ENCODE measurements at regions of chr12 and their contacts with region 1.

Region 1: GRCh38 chr12:118103604-118104382 is at the start of gene VSIG10:
- DNase-seq: peak; percentile 74 to 80
- ATAC-seq: peak; percentile 93
- H3K4me3 ChIP-seq: peak within 1 kb of the TSS; percentile 70 to 93 (median 92)
- H3K27ac ChIP-seq: peak within 1 kb of the TSS; percentile 81 to 97 (median 95)
- H3K4me1 ChIP-seq: peaks cover 14 to 24% of the 10 kb centered on the region in 2 donors
- H3K27me3 ChIP-seq: no peaks in the 10 kb centered on the region
- CTCF ChIP-seq: no peak
- POLR2A ChIP-seq: peak; percentile 49 to 71
- total RNA-seq, gene VSIG10: 9.3 to 22.1 (median 17.0) TPM

Region 2: GRCh38 chr12:118016424-118017264 is 87.1 kb before region 1 on chr12 and contains the start of gene RFC5:
- in situ Hi-C with region 1: no loop called
- intact Hi-C with region 1: loop called (anchors 10 kb)
- DNase-seq: peak; percentile 94 to 96
- ATAC-seq: peak; percentile 96 to 98
- H3K4me3 ChIP-seq: peak within 1 kb of the TSS; percentile 81 to 97 (median 92)
- H3K27ac ChIP-seq: peak within 1 kb of the TSS; percentile 49 to 73 (median 60)
- H3K4me1 ChIP-seq: peaks cover 11 to 12% of the 10 kb centered on the region in 2 donors
- H3K27me3 ChIP-seq: no peaks in the 10 kb centered on the region
- CTCF ChIP-seq: no peak
- POLR2A ChIP-seq: no peak
- total RNA-seq, gene RFC5: 3.5 to 9.9 (median 5.4) TPM

Region 3: DNA sequence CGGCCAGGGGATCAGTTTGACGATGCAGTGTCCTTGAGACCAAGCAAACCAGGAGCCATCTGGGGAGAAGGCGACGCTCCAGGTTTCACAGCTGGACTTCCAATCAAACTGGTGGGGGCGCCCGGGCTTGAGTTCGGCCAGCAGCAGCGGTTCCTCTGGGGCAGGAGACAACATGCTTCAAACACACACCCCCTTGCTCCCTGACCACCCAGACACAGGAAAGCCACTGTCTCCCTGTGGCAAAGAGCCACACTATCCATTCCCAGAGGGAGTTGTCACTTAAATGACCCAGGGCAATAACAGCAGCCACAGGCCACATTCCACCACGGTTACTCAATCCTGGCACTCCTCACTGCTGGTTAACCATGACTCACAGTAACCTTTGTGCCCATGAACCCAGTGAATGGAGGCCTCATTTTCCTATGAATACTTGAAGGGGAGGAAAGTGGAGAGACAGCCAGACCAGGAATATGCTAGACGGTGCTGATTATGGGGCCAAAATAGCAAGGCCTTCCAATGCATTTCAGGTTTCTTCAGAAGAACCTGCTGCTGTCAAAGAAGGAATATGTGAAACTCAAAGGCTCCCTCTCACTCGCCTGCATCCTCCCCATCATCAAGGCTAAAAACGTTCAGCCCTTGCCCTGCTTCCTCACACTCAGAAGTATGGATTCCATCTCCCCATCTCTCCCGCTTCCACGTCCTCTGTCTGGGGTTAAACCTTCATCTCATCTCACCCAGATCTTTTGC is 51.3 kb before region 1 on chr12:
- in situ Hi-C with region 1: no loop called
- intact Hi-C with region 1: loop called (anchors 2 kb)
- DNase-seq: peak; percentile 76 to 95
- ATAC-seq: peak; percentile 99 to 100
- H3K4me3 ChIP-seq: peak overlapping the region in 3 of 4 donors; percentile 8 to 11 (median 10)
- H3K27ac ChIP-seq: peak overlapping the region; percentile 67 to 82 (median 80)
- H3K4me1 ChIP-seq: peaks cover 44 to 54% of the 10 kb centered on the region in 2 donors
- H3K27me3 ChIP-seq: no peaks in the 10 kb centered on the region
- CTCF ChIP-seq: no peak
- POLR2A ChIP-seq: no peak

Region 4: GRCh38 chr12:118061011-118061875 is 42.5 kb before region 1 on chr12 and contains the start of gene WSB2:
- in situ Hi-C with region 1: no loop called
- intact Hi-C with region 1: loop called (anchors 2 kb)
- DNase-seq: peak; percentile 58 to 67
- ATAC-seq: peak; percentile 65 to 66
- H3K4me3 ChIP-seq: peak within 1 kb of the TSS; percentile 82 to 94 (median 87)
- H3K27ac ChIP-seq: peak within 1 kb of the TSS; percentile 92 to 96 (median 96)
- H3K4me1 ChIP-seq: peaks cover 23 to 30% of the 10 kb centered on the region in 2 donors
- H3K27me3 ChIP-seq: no peaks in the 10 kb centered on the region
- CTCF ChIP-seq: no peak
- POLR2A ChIP-seq: peak; percentile 30 to 45
- total RNA-seq, gene WSB2: 83.5 to 133 (median 93.5) TPM

Region 5: GRCh38 chr12:118135788-118136558 is 32.2 kb after region 1 on chr12 and contains the start of gene PEBP1:
- in situ Hi-C with region 1: no loop called
- intact Hi-C with region 1: loop called (anchors 1 kb)
- DNase-seq: peak; percentile 94 to 95
- ATAC-seq: peak; percentile 81 to 91
- H3K4me3 ChIP-seq: peak within 1 kb of the TSS; percentile 75 to 94 (median 92)
- H3K27ac ChIP-seq: peak within 1 kb of the TSS; percentile 91 to 97 (median 96)
- H3K4me1 ChIP-seq: peaks cover 14 to 37% of the 10 kb centered on the region in 2 donors
- H3K27me3 ChIP-seq: no peaks in the 10 kb centered on the region
- CTCF ChIP-seq: peak in 1 of 5 experiments; percentile 27
- POLR2A ChIP-seq: peak; percentile 92 to 93
- total RNA-seq, gene PEBP1: 306 to 442 (median 330) TPM

Region 6: DNA sequence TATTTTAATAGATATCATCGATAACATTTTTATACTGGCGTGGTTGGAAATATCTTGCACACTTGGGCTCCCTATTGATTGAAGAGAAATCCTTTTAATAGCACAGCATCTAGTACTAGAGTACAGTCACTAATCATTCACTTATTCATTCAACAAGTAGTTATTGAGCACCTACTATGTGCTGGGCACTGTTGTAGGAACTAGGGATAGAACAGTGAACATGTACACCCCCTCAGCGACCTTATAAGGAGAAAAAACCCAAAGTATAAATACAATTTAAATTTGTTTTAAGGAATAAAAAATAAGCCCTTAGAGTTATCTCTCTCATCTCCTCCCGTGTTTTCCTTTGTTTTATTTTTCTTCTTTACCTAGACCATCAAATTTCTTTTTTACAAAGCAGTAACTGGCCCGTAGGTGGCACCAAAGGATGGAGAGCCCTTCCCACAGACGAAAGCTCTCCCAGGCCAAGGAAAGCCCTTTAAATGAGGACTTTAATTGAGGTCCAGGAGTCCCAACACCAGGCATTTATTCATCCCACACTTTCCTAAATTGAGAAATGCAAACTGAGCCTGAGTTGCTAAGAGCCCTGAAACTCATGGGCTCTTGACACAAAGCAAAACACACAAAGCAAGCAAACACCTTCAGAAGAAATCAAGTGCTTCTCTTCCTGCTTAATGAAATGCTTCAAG is 61.1 kb after region 1 on chr12:
- in situ Hi-C with region 1: no loop called
- intact Hi-C with region 1: no loop called
- DNase-seq: no peak
- ATAC-seq: no peak
- H3K4me3 ChIP-seq: no peak overlapping the region
- H3K27ac ChIP-seq: no peak overlapping the region
- H3K4me1 ChIP-seq: no peaks in the 10 kb centered on the region
- H3K27me3 ChIP-seq: no peaks in the 10 kb centered on the region
- CTCF ChIP-seq: no peak
- POLR2A ChIP-seq: no peak

Measured in gastrocnemius medialis (tissue), 4 donors.